ENCODE measurements at regions of chr14 and their contacts with region 1.

Region 1: DNA sequence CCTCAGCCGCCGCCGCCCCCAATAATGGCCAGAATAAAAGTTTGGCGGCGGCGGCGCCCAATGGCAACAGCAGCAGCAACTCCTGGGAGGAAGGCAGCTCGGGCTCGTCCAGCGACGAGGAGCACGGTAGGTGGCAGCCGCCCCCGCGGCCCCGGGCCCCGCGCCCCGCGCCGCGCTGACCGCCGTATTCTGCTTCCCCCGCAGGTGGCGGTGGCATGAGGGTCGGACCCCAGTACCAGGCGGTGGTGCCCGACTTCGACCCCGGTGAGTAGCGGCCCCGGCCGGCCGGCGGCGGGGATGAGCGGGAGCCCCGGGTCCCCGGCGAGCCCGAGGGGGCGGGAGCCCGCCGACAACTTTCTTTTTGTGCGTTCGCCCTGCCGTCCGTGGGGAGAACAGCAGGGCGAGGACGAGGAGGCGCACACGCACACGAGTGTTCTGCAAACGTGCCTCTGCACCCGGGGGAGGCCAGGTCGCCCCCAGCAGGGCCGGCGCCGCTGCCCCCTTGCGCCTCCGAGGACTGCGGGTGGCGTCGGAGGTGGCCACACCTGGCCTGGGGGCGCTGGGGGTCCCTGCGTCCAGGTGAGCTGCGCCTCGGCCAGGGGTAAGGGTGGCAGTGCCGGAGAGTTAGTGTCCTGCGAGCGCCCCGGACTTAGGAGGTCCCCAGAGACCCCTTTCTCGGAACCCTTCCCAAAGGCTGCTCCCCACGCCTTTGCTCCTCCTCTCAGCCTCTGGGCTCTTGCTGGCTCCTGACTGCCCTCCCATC is 794 bp downstream of the RCOR1 start:
- DNase-seq: peak; percentile 36 to 78 (median 57)
- ATAC-seq: peak; percentile 19 to 26 (median 25)
- H3K4me3 ChIP-seq: peak overlapping the region; percentile 60 to 88
- H3K4me3 Mint-ChIP-seq: peak overlapping the region; percentile 76 to 88 (median 81)
- H3K27ac ChIP-seq: peak overlapping the region; percentile 4
- H3K27ac Mint-ChIP-seq: peak overlapping the region; percentile 71 to 84
- H3K4me1 ChIP-seq: peaks cover 13 to 18% of the 10 kb centered on the region in 2 experiments
- H3K4me1 Mint-ChIP-seq: peaks cover 20 to 25% (median 24%) of the 10 kb centered on the region in 3 donors
- H3K27me3 ChIP-seq: no peaks in the 10 kb centered on the region
- H3K27me3 Mint-ChIP-seq: no peaks in the 10 kb centered on the region

Region 2: GRCh38 chr14:102574924-102575480 is 18.2 kb before region 1 on chr14:
- CTCF ChIA-PET with region 1: no interaction called
- POLR2A ChIA-PET with region 1: no interaction called
- DNase-seq: no peak
- ATAC-seq: no peak
- H3K4me3 ChIP-seq: no peak overlapping the region
- H3K4me3 Mint-ChIP-seq: peak overlapping the region in 1 of 3 donors; percentile 25
- H3K27ac ChIP-seq: no peak overlapping the region
- H3K27ac Mint-ChIP-seq: no peak overlapping the region
- H3K4me1 ChIP-seq: peaks cover 4 to 5% of the 10 kb centered on the region in 2 experiments
- H3K4me1 Mint-ChIP-seq: peaks cover 7 to 10% (median 7%) of the 10 kb centered on the region in 3 donors
- H3K27me3 ChIP-seq: peaks cover 0 to 19% of the 10 kb centered on the region in 2 experiments
- H3K27me3 Mint-ChIP-seq: no peaks in the 10 kb centered on the region

Region 3: GRCh38 chr14:102629808-102630350 is 36.6 kb after region 1 on chr14:
- CTCF ChIA-PET with region 1: interaction called in 1 of 2 experiments, 3 read pairs
- POLR2A ChIA-PET with region 1: interaction called in 1 of 2 experiments, 10 read pairs
- DNase-seq: no peak
- ATAC-seq: no peak
- H3K4me3 ChIP-seq: no peak overlapping the region
- H3K4me3 Mint-ChIP-seq: no peak overlapping the region
- H3K27ac ChIP-seq: no peak overlapping the region
- H3K27ac Mint-ChIP-seq: no peak overlapping the region
- H3K4me1 ChIP-seq: no peaks in the 10 kb centered on the region
- H3K4me1 Mint-ChIP-seq: peaks cover 37 to 45% (median 43%) of the 10 kb centered on the region in 3 donors
- H3K27me3 ChIP-seq: no peaks in the 10 kb centered on the region
- H3K27me3 Mint-ChIP-seq: no peaks in the 10 kb centered on the region

Region 4: GRCh38 chr14:102973706-102974285 is 380.6 kb after region 1 on chr14:
- CTCF ChIA-PET with region 1: no interaction called
- POLR2A ChIA-PET with region 1: no interaction called
- DNase-seq: no peak
- ATAC-seq: no peak
- H3K4me3 ChIP-seq: no peak overlapping the region
- H3K4me3 Mint-ChIP-seq: no peak overlapping the region
- H3K27ac ChIP-seq: no peak overlapping the region
- H3K27ac Mint-ChIP-seq: no peak overlapping the region
- H3K4me1 ChIP-seq: no peaks in the 10 kb centered on the region
- H3K4me1 Mint-ChIP-seq: no peaks in the 10 kb centered on the region
- H3K27me3 ChIP-seq: peaks cover 0 to 9% of the 10 kb centered on the region in 2 experiments
- H3K27me3 Mint-ChIP-seq: no peaks in the 10 kb centered on the region

Region 5: DNA sequence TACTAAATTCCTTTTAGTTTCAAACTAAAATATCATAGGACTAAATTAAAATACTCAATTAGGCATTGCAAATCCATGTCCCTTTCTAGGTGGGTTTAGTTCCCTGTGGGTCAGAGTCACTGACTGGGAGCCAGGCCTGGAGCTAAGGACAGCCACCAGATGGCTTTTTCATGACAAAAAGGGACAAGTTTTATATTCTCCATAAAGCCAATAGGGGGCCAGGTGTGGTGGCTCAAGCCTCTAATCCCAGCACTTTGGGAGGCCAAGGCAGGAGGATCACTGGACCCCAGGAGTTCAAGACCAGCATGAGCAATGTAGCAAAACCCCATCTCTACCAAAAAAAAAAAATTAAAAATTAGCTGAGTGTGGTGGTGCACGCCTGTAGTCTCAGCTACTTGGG is 705.4 kb after region 1 on chr14:
- CTCF ChIA-PET with region 1: no interaction called
- POLR2A ChIA-PET with region 1: no interaction called
- DNase-seq: no peak
- ATAC-seq: no peak
- H3K4me3 ChIP-seq: no peak overlapping the region
- H3K4me3 Mint-ChIP-seq: no peak overlapping the region
- H3K27ac ChIP-seq: no peak overlapping the region
- H3K27ac Mint-ChIP-seq: no peak overlapping the region
- H3K4me1 ChIP-seq: no peaks in the 10 kb centered on the region
- H3K4me1 Mint-ChIP-seq: no peaks in the 10 kb centered on the region
- H3K27me3 ChIP-seq: peaks cover 0 to 15% of the 10 kb centered on the region in 2 experiments
- H3K27me3 Mint-ChIP-seq: peaks cover 6 to 7% of the 10 kb centered on the region in 2 donors

Measured in T-cell (primary cell).